Activated T-helper 2 cell treated with anti-CD3 and anti-CD28 coated beads, Interferon-gamma antibody, Interleukin-2, Interleukin-4, amounts not matched to agents 10 μg/mL and 5 μg/mL and 100 μg/mL, durations not matched to agents 14 hours and 24 hours and 36 hours (primary cell): ENCODE measurements at regions of chr16 and their contacts with region 1.

Region 1: DNA sequence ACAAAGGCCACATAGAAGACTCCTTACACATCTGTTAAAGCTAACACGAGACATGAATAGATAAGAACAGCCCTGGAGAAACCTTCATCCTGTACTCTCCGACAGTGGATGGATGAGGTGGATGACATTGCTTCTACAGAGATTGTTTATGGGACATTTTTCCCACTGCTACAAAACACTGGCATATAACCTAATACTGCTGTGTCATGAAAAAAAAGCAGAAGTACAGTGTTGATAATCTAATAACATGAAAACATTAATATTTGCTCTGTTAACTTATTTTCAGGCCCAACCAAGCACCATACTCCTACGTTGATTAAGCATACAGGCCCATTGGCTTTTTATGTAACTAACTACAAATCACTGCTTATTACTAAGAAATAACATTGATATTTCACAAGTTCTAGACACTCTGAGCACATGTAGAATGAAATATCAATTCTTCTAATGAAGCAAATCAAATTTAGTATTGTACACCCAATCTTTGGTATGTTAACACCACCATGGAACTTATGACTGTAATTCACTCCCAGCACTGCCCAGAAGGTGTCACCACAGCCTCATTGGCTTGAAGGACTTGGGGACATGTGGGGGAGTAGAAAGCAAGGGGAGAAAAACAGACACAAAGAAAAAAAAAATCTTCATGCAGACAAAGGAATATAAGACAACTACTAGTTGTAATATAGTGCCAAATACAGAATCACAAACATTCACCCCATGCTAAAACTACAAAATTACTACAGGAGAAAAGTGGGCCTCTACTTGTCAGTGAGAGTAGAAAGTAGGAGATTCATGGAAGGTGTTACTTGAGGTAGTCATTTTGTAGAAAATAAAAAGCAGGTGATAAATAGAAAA is 330.0 kb upstream of the PMFBP1 start:
- DNase-seq: no peak
- H3K4me3 Mint-ChIP-seq: no peak overlapping the region
- H3K27ac Mint-ChIP-seq: no peak overlapping the region
- H3K4me1 Mint-ChIP-seq: no peaks in the 10 kb centered on the region
- H3K27me3 Mint-ChIP-seq: no peaks in the 10 kb centered on the region

Region 2: GRCh38 chr16:72480901-72481300 is 21.1 kb before region 1 on chr16:
- intact Hi-C with region 1: no loop called
- DNase-seq: no peak
- H3K4me3 Mint-ChIP-seq: no peak overlapping the region
- H3K27ac Mint-ChIP-seq: no peak overlapping the region
- H3K4me1 Mint-ChIP-seq: peaks cover 20% of the 10 kb centered on the region
- H3K27me3 Mint-ChIP-seq: no peaks in the 10 kb centered on the region

Region 3: GRCh38 chr16:72847187-72848027 is 345.4 kb after region 1 on chr16:
- intact Hi-C with region 1: loop called (anchors 5 kb)
- DNase-seq: no peak
- H3K4me3 Mint-ChIP-seq: no peak overlapping the region
- H3K27ac Mint-ChIP-seq: no peak overlapping the region
- H3K4me1 Mint-ChIP-seq: peaks cover 27% of the 10 kb centered on the region
- H3K27me3 Mint-ChIP-seq: peaks cover 4% of the 10 kb centered on the region

Region 4: DNA sequence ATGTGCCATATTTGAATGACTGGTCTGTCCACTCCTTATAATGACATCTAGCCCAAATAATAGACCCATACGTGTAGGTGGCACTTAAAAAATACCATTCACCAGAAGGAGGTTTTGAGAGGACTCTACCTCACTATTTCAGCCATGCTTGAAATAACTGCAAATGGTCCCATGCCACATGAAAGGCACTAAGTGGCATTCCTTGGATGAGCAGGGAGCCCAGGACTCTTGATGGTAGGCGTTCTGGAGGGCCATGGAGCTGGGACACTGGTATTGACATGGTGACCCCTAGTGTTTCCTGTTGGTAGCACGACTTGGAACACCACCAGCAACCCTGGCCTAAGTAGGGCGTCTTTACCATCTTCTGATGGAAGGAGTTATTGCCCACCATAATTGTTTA is 694.7 kb after region 1 on chr16:
- intact Hi-C with region 1: loop called (anchors 5 kb)
- DNase-seq: no peak
- H3K4me3 Mint-ChIP-seq: no peak overlapping the region
- H3K27ac Mint-ChIP-seq: no peak overlapping the region
- H3K4me1 Mint-ChIP-seq: no peaks in the 10 kb centered on the region
- H3K27me3 Mint-ChIP-seq: no peaks in the 10 kb centered on the region